Tibial artery (tissue), 4 donors: ENCODE measurements at regions of chr10 and their contacts with region 1.

Region 1: DNA sequence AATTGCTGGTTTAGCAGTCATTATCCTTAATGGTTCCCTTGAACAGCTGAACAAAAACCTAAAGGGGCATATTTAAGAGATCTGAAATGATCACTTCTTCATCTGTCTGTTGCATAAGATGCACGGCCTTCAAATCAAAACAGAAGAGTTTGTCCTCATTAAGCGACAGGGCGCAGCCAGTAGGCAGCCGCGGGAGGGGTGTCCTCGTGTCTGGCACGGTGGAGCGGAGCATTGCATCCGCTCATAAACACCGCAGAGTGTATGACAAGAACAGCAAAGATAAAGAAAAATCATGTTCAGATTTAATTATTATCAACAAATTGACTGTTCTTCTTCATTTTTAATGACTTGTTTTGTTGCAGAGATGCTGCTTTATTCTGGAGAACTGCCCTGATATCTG is 255.6 kb upstream of the ADARB2 start:
- DNase-seq: no peak
- H3K4me3 ChIP-seq: no peak overlapping the region
- H3K27ac ChIP-seq: no peak overlapping the region
- H3K4me1 ChIP-seq: no peaks in the 10 kb centered on the region
- H3K27me3 ChIP-seq: no peaks in the 10 kb centered on the region
- CTCF ChIP-seq: no peak

Region 2: GRCh38 chr10:2143213-2143835 is 150.4 kb after region 1 on chr10:
- intact Hi-C with region 1: loop called (anchors 2 kb)
- DNase-seq: no peak
- H3K4me3 ChIP-seq: no peak overlapping the region
- H3K27ac ChIP-seq: no peak overlapping the region
- H3K4me1 ChIP-seq: no peaks in the 10 kb centered on the region
- H3K27me3 ChIP-seq: no peaks in the 10 kb centered on the region
- CTCF ChIP-seq: no peak